ENCODE measurements at regions of chr3 and their contacts with region 1.

Region 1: GRCh38 chr3:52455283-52456168 is at the start of gene NISCH:
- DNase-seq: peak; percentile 92 to 95
- ATAC-seq: peak; percentile 29 to 77 (median 58)
- H3K4me3 ChIP-seq: peak within 1 kb of the TSS; percentile 65 to 96 (median 80)
- H3K27ac ChIP-seq: peak within 1 kb of the TSS; percentile 88 to 99 (median 92)
- H3K4me1 ChIP-seq: peaks cover 17 to 41% (median 31%) of the 10 kb centered on the region in 9 donors
- H3K27me3 ChIP-seq: no peaks in the 10 kb centered on the region
- CTCF ChIP-seq: no peak
- total RNA-seq, gene NISCH: 35.3 to 56.3 (median 41.9) TPM

Region 2: DNA sequence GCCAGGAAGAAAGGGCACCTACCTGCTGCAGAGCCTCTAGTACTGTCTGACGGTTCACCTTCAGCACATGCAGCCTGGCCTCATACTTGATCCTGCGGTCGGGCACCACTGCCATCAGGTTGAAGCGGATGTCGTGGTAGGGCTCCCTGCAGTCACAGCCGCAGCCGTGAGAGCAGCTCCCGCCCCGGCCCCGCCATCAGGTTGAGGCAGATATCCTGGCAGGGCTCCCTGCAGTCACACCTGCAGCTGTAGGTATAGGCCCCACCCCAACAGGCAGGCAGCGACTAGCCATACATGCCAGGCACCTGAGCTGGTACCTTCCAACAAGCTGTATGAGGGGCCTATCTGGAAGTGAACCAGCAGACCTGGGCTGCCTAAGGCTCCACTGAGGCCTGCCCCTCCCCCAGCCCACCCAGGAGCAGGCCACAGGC is 49.3 kb before region 1 on chr3:
- intact Hi-C with region 1: no loop called
- DNase-seq: no peak
- ATAC-seq: no peak
- H3K4me3 ChIP-seq: no peak overlapping the region
- H3K27ac ChIP-seq: no peak overlapping the region
- H3K4me1 ChIP-seq: peaks cover 0 to 30% (median 20%) of the 10 kb centered on the region in 9 donors
- H3K27me3 ChIP-seq: no peaks in the 10 kb centered on the region
- CTCF ChIP-seq: no peak

Region 3: DNA sequence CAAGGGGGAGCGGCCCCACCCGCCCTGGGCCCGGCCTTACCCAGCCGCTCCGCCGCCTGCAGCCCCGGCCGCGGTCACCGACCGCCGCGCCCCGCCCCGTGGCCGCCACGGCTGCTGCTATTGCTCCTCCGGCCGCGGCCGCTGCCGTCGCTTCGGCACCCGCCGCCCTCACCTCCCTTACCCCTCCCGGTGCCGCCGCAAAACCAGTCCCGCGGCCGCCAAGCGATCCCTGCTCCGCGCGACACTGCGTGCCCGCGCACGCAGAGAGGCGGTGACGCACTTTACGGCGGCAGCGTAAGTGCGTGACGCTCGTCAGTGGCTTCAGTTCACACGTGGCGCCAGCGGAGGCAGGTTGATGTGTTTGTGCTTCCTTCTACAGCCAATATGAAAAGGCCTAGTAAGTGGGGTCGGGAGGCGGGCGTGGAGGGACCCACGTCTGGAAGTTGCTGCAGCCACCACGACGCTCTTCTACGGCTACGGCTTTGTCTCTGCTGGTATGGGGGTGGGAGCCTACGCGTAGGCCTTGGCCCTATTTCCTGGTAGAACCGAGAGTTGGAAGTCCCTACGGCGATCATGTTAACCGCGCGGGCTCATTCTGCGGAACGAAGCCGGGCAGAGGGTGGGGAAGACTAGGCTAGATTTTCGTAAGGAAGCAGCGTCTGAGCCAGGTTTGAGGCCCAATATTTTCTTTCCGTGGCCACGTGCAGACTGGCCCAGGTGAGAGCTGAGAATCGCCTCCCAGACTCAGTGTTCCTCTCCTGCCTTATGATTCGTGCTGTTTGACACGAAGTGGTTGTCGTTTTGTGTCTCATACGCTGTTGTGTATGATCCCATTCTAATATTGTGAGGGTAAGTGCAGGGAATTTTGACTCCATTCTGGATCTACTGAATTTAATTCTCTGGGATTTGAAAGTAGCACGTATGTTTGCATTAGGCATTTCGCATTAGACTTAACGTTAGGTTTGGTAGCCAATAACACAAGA is 230.5 kb after region 1 on chr3 and contains the starts of genes GNL3 and PBRM1:
- intact Hi-C with region 1: loop called in 4 of 10 experiments (anchors 10 kb)
- DNase-seq: peak; percentile 92 to 93
- ATAC-seq: peak; percentile 87 to 97 (median 92)
- H3K4me3 ChIP-seq: peak within 1 kb of the TSS; percentile 50 to 95 (median 76)
- H3K27ac ChIP-seq: peak within 1 kb of the TSS; percentile 91 to 99 (median 98)
- H3K4me1 ChIP-seq: peaks cover 0 to 55% (median 52%) of the 10 kb centered on the region in 9 donors
- H3K27me3 ChIP-seq: no peaks in the 10 kb centered on the region
- CTCF ChIP-seq: peak in 1 of 9 donors; percentile 10
- total RNA-seq, gene GNL3: 20.6 to 45.1 (median 25.7) TPM
- total RNA-seq, gene PBRM1: 41.6 to 63.9 (median 51.7) TPM